Naive thymus-derived CD4-positive, alpha-beta T cell (primary cell): ENCODE measurements at regions of chr22 and their contacts with region 1.

Region 1: GRCh38 chr22:26589845-26590736 is at the start of gene TPST2:
- DNase-seq: peak; percentile 70 to 90 (median 76)
- ATAC-seq: peak; percentile 95
- H3K4me3 ChIP-seq: peak within 1 kb of the TSS; percentile 92
- H3K4me3 Mint-ChIP-seq: peak within 1 kb of the TSS; percentile 90 to 97 (median 94)
- H3K27ac ChIP-seq: peak within 1 kb of the TSS; percentile 79
- H3K27ac Mint-ChIP-seq: peak within 1 kb of the TSS; percentile 85 to 93 (median 91)
- H3K4me1 ChIP-seq: peaks cover 40 to 53% of the 10 kb centered on the region in 2 donors
- H3K4me1 Mint-ChIP-seq: peaks cover 32 to 79% (median 73%) of the 10 kb centered on the region in 7 donors
- H3K27me3 ChIP-seq: no peaks in the 10 kb centered on the region
- H3K27me3 Mint-ChIP-seq: no peaks in the 10 kb centered on the region
- total RNA-seq, gene TPST2: 16.7 to 44.8 (median 20.6) TPM

Region 2: GRCh38 chr22:26483439-26484359 is 106.4 kb before region 1 on chr22 and contains the starts of genes HPS4 and SRRD:
- CTCF ChIA-PET with region 1: no interaction called
- POLR2A ChIA-PET with region 1: interaction called, 10 read pairs
- intact Hi-C with region 1: loop called (anchors 1 to 5 kb)
- DNase-seq: peak; percentile 90 to 99 (median 94)
- ATAC-seq: peak; percentile 93
- H3K4me3 ChIP-seq: peak within 1 kb of the TSS; percentile 61
- H3K4me3 Mint-ChIP-seq: peak within 1 kb of the TSS; percentile 75 to 97 (median 93)
- H3K27ac ChIP-seq: peak within 1 kb of the TSS; percentile 95
- H3K27ac Mint-ChIP-seq: peak within 1 kb of the TSS; percentile 93 to 99 (median 98)
- H3K4me1 ChIP-seq: peaks cover 17 to 48% of the 10 kb centered on the region in 2 donors
- H3K4me1 Mint-ChIP-seq: peaks cover 47 to 77% (median 68%) of the 10 kb centered on the region in 7 donors
- H3K27me3 ChIP-seq: no peaks in the 10 kb centered on the region
- H3K27me3 Mint-ChIP-seq: no peaks in the 10 kb centered on the region
- total RNA-seq, gene HPS4: 45.5 to 64.3 (median 59.1) TPM
- total RNA-seq, gene SRRD: 18.9 to 22.8 (median 20.1) TPM

Region 3: GRCh38 chr22:26511857-26512793 is 78.0 kb before region 1 on chr22 and contains the start of gene TFIP11:
- CTCF ChIA-PET with region 1: no interaction called
- POLR2A ChIA-PET with region 1: interaction called, 3 read pairs
- intact Hi-C with region 1: loop called (anchors 2 kb)
- DNase-seq: peak; percentile 80 to 93 (median 84)
- ATAC-seq: peak; percentile 97
- H3K4me3 ChIP-seq: peak within 1 kb of the TSS; percentile 89
- H3K4me3 Mint-ChIP-seq: peak within 1 kb of the TSS; percentile 96 to 100 (median 99)
- H3K27ac ChIP-seq: peak within 1 kb of the TSS; percentile 96
- H3K27ac Mint-ChIP-seq: peak within 1 kb of the TSS; percentile 96 to 100 (median 99)
- H3K4me1 ChIP-seq: peaks cover 9 to 23% of the 10 kb centered on the region in 2 donors
- H3K4me1 Mint-ChIP-seq: peaks cover 29 to 52% (median 50%) of the 10 kb centered on the region in 7 donors
- H3K27me3 ChIP-seq: no peaks in the 10 kb centered on the region
- H3K27me3 Mint-ChIP-seq: no peaks in the 10 kb centered on the region
- total RNA-seq, gene TFIP11: 63.6 to 107 (median 72.9) TPM

Region 4: DNA sequence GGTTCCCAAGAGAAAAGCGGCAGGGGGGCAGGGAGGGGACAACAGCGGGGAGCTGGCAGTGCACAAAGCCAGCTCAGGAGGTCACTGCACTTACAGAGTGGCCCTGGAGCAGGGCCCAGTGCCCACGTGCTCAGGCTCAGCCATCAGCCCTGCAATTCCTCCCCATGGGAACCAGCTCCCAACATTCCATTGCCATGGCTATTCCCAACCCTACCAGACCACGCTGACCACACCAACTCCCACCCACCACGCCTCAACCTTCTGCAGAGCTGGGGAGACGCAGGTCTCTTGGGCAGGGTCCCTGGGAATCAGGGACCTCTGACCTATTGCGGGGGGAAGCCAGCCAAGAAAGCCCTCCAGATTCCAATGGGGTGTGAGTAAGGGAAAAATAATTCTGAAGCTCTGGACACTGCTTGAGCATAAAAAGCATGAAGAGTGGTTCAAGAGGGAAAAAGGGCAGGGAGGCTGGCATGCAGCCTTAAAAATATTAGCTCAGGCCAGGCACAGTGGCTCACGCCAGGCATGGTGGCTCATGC is 39.5 kb before region 1 on chr22:
- CTCF ChIA-PET with region 1: no interaction called
- POLR2A ChIA-PET with region 1: no interaction called
- intact Hi-C with region 1: no loop called
- DNase-seq: no peak
- ATAC-seq: no peak
- H3K4me3 ChIP-seq: no peak overlapping the region
- H3K4me3 Mint-ChIP-seq: no peak overlapping the region
- H3K27ac ChIP-seq: no peak overlapping the region
- H3K27ac Mint-ChIP-seq: no peak overlapping the region
- H3K4me1 ChIP-seq: peaks cover 0 to 9% of the 10 kb centered on the region in 2 donors
- H3K4me1 Mint-ChIP-seq: peaks cover 8 to 40% (median 15%) of the 10 kb centered on the region in 7 donors
- H3K27me3 ChIP-seq: no peaks in the 10 kb centered on the region
- H3K27me3 Mint-ChIP-seq: no peaks in the 10 kb centered on the region

Region 5: GRCh38 chr22:26573026-26573662 is 16.9 kb before region 1 on chr22:
- CTCF ChIA-PET with region 1: interaction called, 3 read pairs
- POLR2A ChIA-PET with region 1: interaction called, 6 read pairs
- intact Hi-C with region 1: loop called in 1 of 2 experiments (anchors 2 kb)
- DNase-seq: no peak
- ATAC-seq: peak; percentile 91
- H3K4me3 ChIP-seq: no peak overlapping the region
- H3K4me3 Mint-ChIP-seq: peak overlapping the region in 6 of 10 donors; percentile 14 to 51 (median 33)
- H3K27ac ChIP-seq: no peak overlapping the region
- H3K27ac Mint-ChIP-seq: peak overlapping the region; percentile 49 to 86 (median 77)
- H3K4me1 ChIP-seq: peaks cover 6 to 22% of the 10 kb centered on the region in 2 donors
- H3K4me1 Mint-ChIP-seq: peaks cover 34 to 75% (median 57%) of the 10 kb centered on the region in 7 donors
- H3K27me3 ChIP-seq: no peaks in the 10 kb centered on the region
- H3K27me3 Mint-ChIP-seq: no peaks in the 10 kb centered on the region

Region 6: GRCh38 chr22:26629988-26630761 is 40.1 kb after region 1 on chr22:
- CTCF ChIA-PET with region 1: no interaction called
- POLR2A ChIA-PET with region 1: no interaction called
- intact Hi-C with region 1: loop called in 1 of 2 experiments (anchors 5 kb)
- DNase-seq: no peak
- ATAC-seq: no peak
- H3K4me3 ChIP-seq: no peak overlapping the region
- H3K4me3 Mint-ChIP-seq: no peak overlapping the region
- H3K27ac ChIP-seq: no peak overlapping the region
- H3K27ac Mint-ChIP-seq: no peak overlapping the region
- H3K4me1 ChIP-seq: peaks cover 0 to 9% of the 10 kb centered on the region in 2 donors
- H3K4me1 Mint-ChIP-seq: peaks cover 0 to 26% (median 4%) of the 10 kb centered on the region in 7 donors
- H3K27me3 ChIP-seq: no peaks in the 10 kb centered on the region
- H3K27me3 Mint-ChIP-seq: peaks cover 0 to 5% (median 0%) of the 10 kb centered on the region in 5 donors